ENCODE measurements at regions of chr11 and their contacts with region 1.

Region 1: GRCh38 chr11:18395735-18396504 is 1.6 kb downstream of the LDHA start:
- DNase-seq: peak; percentile 98 to 99 (median 99)
- H3K4me3 ChIP-seq: peak overlapping the region; percentile 85 to 100 (median 99)
- H3K27ac ChIP-seq: peak overlapping the region; percentile 78 to 94
- H3K4me1 ChIP-seq: peaks cover 5 to 42% (median 23%) of the 10 kb centered on the region in 4 experiments
- H3K27me3 ChIP-seq: no peaks in the 10 kb centered on the region

Region 2: GRCh38 chr11:18203723-18204122 is 192.2 kb before region 1 on chr11:
- CTCF ChIA-PET with region 1: no interaction called
- POLR2A ChIA-PET with region 1: no interaction called
- DNase-seq: peak; percentile 8 to 28 (median 21)
- H3K4me3 ChIP-seq: no peak overlapping the region
- H3K27ac ChIP-seq: no peak overlapping the region
- H3K4me1 ChIP-seq: no peaks in the 10 kb centered on the region
- H3K27me3 ChIP-seq: peaks cover 4 to 57% (median 19%) of the 10 kb centered on the region in 5 experiments

Region 3: GRCh38 chr11:18368221-18368620 is 27.7 kb before region 1 on chr11:
- CTCF ChIA-PET with region 1: interaction called, 10 read pairs
- POLR2A ChIA-PET with region 1: interaction called, 12 read pairs
- DNase-seq: peak in 2 of 3 donors; percentile 32 to 52
- H3K4me3 ChIP-seq: no peak overlapping the region
- H3K27ac ChIP-seq: no peak overlapping the region
- H3K4me1 ChIP-seq: peaks cover 24 to 72% (median 44%) of the 10 kb centered on the region in 4 experiments
- H3K27me3 ChIP-seq: no peaks in the 10 kb centered on the region

Region 4: DNA sequence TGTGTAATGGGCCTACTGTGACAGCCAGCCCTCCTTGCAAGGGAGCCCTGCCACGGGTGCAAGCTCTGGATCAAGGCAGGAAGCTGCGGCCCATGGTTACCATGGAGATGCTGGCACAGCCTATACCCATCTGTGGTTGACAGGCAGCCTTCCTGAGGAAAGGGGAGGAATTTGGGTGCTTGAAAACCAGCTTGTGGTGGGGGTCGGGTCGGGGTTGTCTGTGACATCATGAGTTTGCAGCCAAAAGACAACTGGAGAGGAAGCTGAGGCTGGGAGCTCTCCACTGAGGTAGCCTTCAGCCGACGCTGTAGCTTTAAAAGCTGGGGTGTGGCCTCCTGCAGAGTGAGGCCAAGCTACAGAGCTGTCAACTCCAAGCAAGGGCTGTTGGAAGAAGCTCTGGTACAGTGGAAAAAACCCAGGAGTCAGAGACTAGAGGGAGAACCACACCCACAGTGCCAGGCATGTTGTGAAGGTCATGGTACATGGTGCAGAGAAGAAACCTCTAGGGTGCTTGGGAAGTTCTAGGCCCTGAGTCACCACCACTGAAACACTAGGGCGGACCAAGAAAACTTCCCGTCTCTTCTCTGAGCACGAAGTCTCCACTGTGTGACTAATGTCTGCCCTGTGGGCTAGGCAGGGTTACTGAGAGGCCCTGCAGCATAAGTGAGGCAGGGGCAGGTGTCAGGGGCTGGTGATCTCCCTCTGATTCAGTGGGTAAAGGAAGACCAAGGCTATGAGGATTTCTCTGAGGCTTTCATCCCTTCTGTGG is 12.3 kb before region 1 on chr11:
- CTCF ChIA-PET with region 1: interaction called, 35 read pairs
- POLR2A ChIA-PET with region 1: interaction called, 55 read pairs
- DNase-seq: peak; percentile 80 to 98 (median 96)
- H3K4me3 ChIP-seq: peak overlapping the region in 4 of 7 experiments; percentile 11 to 38 (median 31)
- H3K27ac ChIP-seq: peak overlapping the region; percentile 48 to 87
- H3K4me1 ChIP-seq: peaks cover 12 to 53% (median 37%) of the 10 kb centered on the region in 4 experiments
- H3K27me3 ChIP-seq: no peaks in the 10 kb centered on the region

Region 5: DNA sequence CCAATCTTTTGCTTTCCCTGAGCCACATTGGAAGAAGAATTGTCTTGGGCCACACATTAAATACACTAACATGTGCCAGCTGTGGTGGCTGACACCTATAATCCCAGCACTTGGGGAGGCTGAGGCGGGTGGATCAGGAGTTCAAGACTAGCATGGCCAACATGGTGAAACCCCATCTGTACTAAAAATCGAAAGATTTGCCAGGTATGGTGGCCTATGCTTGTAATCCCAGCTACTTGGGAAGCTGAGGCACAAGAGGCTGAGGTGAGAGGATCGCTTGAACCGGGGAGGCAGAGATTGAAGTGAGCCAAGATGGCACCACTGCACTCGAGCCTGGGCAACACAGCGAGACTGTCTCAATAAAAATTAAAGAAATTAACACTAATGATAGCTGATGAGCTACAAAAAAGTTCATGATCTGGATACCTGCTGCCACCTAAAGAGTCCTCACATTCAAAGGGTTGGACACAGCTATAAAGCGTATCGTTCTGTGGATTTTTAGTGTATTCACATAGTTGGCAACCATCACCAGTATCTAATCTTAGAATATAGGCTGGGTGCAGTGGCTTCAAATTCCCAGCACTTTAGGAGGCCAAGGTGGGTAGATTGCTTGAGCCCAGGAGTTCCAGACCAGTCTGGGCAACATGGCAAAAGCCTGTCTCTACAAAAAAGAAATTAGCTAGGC is 12.8 kb after region 1 on chr11:
- CTCF ChIA-PET with region 1: interaction called, 3 read pairs
- POLR2A ChIA-PET with region 1: interaction called, 16 read pairs
- DNase-seq: no peak
- H3K4me3 ChIP-seq: no peak overlapping the region
- H3K27ac ChIP-seq: no peak overlapping the region
- H3K4me1 ChIP-seq: peaks cover 0 to 7% (median 0%) of the 10 kb centered on the region in 4 experiments
- H3K27me3 ChIP-seq: no peaks in the 10 kb centered on the region

Region 6: GRCh38 chr11:18526521-18527296 is 130.8 kb after region 1 on chr11 and contains the start of gene TSG101:
- CTCF ChIA-PET with region 1: interaction called, 3 read pairs
- POLR2A ChIA-PET with region 1: interaction called, 33 read pairs
- DNase-seq: peak; percentile 94 to 96 (median 95)
- H3K4me3 ChIP-seq: peak within 1 kb of the TSS; percentile 77 to 99 (median 85)
- H3K27ac ChIP-seq: peak within 1 kb of the TSS; percentile 98 to 99
- H3K4me1 ChIP-seq: peaks cover 0 to 19% (median 9%) of the 10 kb centered on the region in 4 experiments
- H3K27me3 ChIP-seq: no peaks in the 10 kb centered on the region